ENCODE measurements at regions of chr5 and their contacts with region 1.

Region 1: GRCh38 chr5:74919487-74919886 is 53.3 kb upstream of the FAM169A start:
- DNase-seq: no peak
- H3K4me3 Mint-ChIP-seq: no peak overlapping the region
- H3K27ac Mint-ChIP-seq: no peak overlapping the region
- H3K4me1 Mint-ChIP-seq: no peaks in the 10 kb centered on the region
- H3K27me3 Mint-ChIP-seq: peaks cover 3% of the 10 kb centered on the region

Region 2: GRCh38 chr5:74903165-74903787 is 16.2 kb before region 1 on chr5:
- CTCF ChIA-PET with region 1: no interaction called
- POLR2A ChIA-PET with region 1: no interaction called
- DNase-seq: no peak
- H3K4me3 Mint-ChIP-seq: no peak overlapping the region
- H3K27ac Mint-ChIP-seq: no peak overlapping the region
- H3K4me1 Mint-ChIP-seq: no peaks in the 10 kb centered on the region
- H3K27me3 Mint-ChIP-seq: peaks cover 5% of the 10 kb centered on the region

Region 3: DNA sequence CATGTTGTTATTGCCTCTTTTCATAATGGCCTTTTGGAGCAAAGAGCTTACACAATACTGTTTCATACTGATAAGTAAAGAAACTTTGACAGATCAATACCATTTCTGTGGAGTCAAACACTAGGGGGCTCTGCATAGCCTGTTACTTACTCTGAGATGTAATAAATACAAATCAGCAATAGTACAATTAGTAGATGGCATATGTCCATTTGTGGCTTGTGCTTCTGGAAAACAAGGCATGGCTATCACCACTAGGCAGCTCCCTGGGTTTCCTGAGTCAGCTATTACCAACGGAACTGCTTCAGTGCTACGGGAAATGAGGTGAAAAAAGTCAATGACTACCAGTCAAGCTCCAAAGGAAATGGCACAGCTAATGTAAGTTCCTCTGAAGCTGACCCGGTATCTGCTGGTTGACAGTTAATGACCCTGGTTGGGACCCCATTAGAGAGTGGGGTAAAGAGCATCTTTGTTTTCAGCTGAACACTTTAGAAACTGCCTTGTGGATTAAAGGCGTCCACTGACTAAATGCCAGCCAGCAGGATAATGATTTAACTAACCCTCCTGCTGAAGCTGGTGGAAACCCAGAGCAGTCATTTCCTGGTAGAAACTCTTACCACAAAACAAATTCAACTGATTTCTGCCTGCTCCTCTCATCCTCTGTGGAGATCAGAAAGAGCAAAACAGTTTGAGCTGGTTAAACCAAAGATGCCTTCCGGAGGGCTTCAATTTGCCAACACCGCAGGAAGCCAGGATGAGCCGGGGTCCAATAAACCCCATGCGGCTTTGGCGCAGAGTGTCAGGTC is 15.7 kb after region 1 on chr5:
- CTCF ChIA-PET with region 1: interaction called, 15 read pairs
- POLR2A ChIA-PET with region 1: no interaction called
- DNase-seq: peak; percentile 31
- H3K4me3 Mint-ChIP-seq: peak overlapping the region; percentile 23
- H3K27ac Mint-ChIP-seq: peak overlapping the region; percentile 75
- H3K4me1 Mint-ChIP-seq: peaks cover 30% of the 10 kb centered on the region
- H3K27me3 Mint-ChIP-seq: peaks cover 9% of the 10 kb centered on the region

Measured in activated CD4-positive, alpha-beta memory T cell treated with anti-CD3 and anti-CD28 coated beads, Interleukin-2, amount 10 ng/mL, durations not matched to agents 7 days and 5 days (primary cell).